Sciatic nerve (tissue), 2 donors: ENCODE measurements at regions of chr13 and their contacts with region 1.

Region 1: DNA sequence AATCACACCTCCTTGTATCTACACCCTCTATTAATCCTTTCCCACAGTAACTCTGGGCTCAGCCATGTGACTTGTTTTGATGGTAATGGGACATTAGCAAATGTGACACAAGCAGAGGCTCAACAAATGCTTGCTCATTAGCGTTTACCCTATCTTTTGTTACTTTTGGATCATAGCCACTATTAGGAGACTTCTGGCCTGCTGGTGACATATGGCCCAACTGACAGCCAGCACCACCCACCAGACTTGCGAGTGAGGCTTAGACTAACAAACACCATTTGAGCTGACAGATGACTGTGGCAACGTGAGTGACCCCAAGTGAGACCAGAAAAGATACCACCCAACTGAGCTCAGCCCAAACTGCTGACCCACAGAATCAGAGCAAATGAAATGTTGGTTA is 154.1 kb downstream of the OLFM4 start:
- DNase-seq: no peak
- ATAC-seq: no peak

Region 2: GRCh38 chr13:52664269-52664668 is 518.5 kb before region 1 on chr13:
- intact Hi-C with region 1: loop called (anchors 5 kb)
- DNase-seq: no peak
- ATAC-seq: no peak